ENCODE measurements at regions of chr21 and their contacts with region 1.

Region 1: DNA sequence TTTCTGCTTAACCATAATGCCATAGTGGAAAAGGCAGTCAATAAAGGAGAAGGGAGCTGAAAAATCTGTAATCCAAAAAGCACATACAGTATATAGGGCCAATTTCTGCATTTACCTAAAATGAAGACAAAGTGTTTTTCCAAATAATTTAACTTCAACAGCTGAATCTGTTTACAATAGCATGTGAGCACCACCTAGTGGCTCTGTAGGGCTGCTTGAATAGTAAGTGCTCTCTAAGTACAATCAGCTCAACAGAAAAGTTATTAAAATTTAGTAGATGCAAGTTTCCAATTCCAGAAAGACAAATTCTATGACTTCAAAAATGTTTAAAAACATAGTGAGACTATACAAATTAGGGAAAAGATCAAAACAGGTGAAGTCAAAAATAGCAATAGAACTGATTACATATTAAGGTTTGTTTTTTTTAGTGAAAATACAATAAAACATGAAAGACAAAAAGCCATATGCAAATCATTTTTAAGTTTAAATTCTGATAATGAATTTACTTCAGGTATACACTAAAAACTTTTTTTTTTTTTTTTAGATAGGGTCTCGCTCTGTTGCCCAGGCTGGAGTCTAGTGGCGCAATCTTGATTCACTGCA is 220.0 kb downstream of the SETD4 start:
- DNase-seq: peak in 1 of 2 donors; percentile 27
- ATAC-seq: peak; percentile 66 to 85 (median 78)
- H3K4me3 ChIP-seq: no peak overlapping the region
- H3K27ac ChIP-seq: no peak overlapping the region
- H3K4me1 ChIP-seq: peaks cover 11% of the 10 kb centered on the region
- H3K27me3 ChIP-seq: no peaks in the 10 kb centered on the region
- CTCF ChIP-seq: peak; percentile 88

Region 2: DNA sequence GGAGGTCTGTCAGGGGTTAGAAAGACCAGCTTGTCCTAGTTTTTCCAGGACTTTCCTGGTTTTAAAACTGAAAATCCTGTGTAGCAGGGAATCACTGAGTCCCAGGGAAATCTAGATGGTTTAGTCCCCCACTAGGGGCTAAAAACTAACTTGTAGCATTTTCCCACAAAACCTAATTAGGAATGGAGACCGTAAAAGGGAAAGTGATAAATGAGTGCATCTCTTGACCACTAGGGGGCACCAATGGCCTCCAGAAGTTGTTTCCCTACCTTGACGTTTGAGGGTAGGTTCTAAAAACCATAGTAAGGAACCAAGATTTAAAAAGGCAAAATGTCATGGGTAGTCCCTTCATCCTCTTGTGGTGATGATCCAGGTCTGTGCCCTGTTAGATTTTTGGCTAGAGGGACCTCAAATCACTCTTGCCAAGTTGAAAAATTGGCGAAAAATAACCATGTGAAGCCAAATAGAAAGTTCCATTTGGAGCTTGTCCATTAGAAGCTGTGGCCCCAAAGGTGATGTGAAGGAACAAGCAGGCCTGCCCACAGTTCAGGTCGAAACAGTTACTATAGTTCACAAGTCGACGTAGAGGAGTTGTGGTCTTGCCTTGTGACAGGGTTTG is 1147.0 kb before region 1 on chr21:
- intact Hi-C with region 1: loop called (anchors 5 kb)
- DNase-seq: no peak
- ATAC-seq: peak; percentile 44 to 57 (median 50)
- H3K4me3 ChIP-seq: no peak overlapping the region
- H3K27ac ChIP-seq: no peak overlapping the region
- H3K4me1 ChIP-seq: peaks cover 26% of the 10 kb centered on the region
- H3K27me3 ChIP-seq: no peaks in the 10 kb centered on the region
- CTCF ChIP-seq: peak; percentile 88

Region 3: GRCh38 chr21:35940074-35940927 is 100.0 kb after region 1 on chr21:
- intact Hi-C with region 1: loop called in 1 of 2 experiments (anchors 5 kb)
- DNase-seq: peak; percentile 21 to 49
- ATAC-seq: peak; percentile 87 to 97 (median 92)
- H3K4me3 ChIP-seq: peak overlapping the region; percentile 40
- H3K27ac ChIP-seq: no peak overlapping the region
- H3K4me1 ChIP-seq: no peaks in the 10 kb centered on the region
- H3K27me3 ChIP-seq: no peaks in the 10 kb centered on the region
- CTCF ChIP-seq: peak; percentile 68

Measured in psoas muscle (tissue), 8 donors.